Spleen (tissue), 13 donors: ENCODE measurements at regions of chr17 and their contacts with region 1.

Region 1: GRCh38 chr17:79393358-79394202 is 217.3 kb downstream of the RBFOX3 start:
- DNase-seq: peak; percentile 92
- H3K4me3 ChIP-seq: no peak overlapping the region
- H3K27ac ChIP-seq: no peak overlapping the region
- H3K4me1 ChIP-seq: peaks cover 0 to 9% (median 5%) of the 10 kb centered on the region in 6 donors
- H3K27me3 ChIP-seq: peaks cover 0 to 100% (median 61%) of the 10 kb centered on the region in 7 donors
- CTCF ChIP-seq: peak; percentile 77 to 96 (median 92)
- POLR2A ChIP-seq: no peak

Region 2: GRCh38 chr17:79087428-79088143 is 306.0 kb before region 1 on chr17:
- intact Hi-C with region 1: loop called (anchors 2 kb)
- DNase-seq: peak; percentile 92
- H3K4me3 ChIP-seq: no peak overlapping the region
- H3K27ac ChIP-seq: no peak overlapping the region
- H3K4me1 ChIP-seq: peaks cover 0 to 44% (median 12%) of the 10 kb centered on the region in 6 donors
- H3K27me3 ChIP-seq: peaks cover 0 to 24% (median 0%) of the 10 kb centered on the region in 7 donors
- CTCF ChIP-seq: peak; percentile 75 to 97 (median 89)
- POLR2A ChIP-seq: no peak

Region 3: DNA sequence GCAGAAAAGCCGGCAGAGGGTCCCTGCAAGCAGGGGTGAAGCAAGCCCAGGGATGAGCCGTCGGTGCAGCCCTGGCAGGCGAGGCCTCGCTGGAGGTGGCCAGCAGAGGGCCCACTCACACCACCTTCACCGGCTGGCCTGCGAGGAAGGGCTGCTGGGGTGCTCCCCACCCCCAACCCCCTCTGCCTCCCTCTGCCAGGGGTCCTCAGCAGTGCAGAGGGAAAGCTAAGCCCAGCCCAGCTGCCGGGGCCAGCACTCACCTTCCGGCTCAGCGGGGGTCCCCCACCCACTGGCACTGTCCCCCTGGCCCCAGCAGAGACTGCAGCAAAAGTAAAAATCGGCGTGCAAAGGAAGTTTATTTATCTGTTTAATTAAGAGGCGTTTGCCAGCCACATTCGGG is 205.5 kb before region 1 on chr17:
- intact Hi-C with region 1: loop called (anchors 5 kb)
- DNase-seq: no peak
- H3K4me3 ChIP-seq: no peak overlapping the region
- H3K27ac ChIP-seq: no peak overlapping the region
- H3K4me1 ChIP-seq: peaks cover 6 to 13% (median 8%) of the 10 kb centered on the region in 6 donors
- H3K27me3 ChIP-seq: peaks cover 2 to 100% (median 76%) of the 10 kb centered on the region in 7 donors
- CTCF ChIP-seq: peak in 9 of 11 experiments; percentile 32 to 67 (median 51)
- POLR2A ChIP-seq: no peak

Region 4: GRCh38 chr17:79531191-79532095 is 137.9 kb after region 1 on chr17:
- intact Hi-C with region 1: no loop called
- DNase-seq: peak; percentile 36
- H3K4me3 ChIP-seq: no peak overlapping the region
- H3K27ac ChIP-seq: no peak overlapping the region
- H3K4me1 ChIP-seq: no peaks in the 10 kb centered on the region
- H3K27me3 ChIP-seq: peaks cover 0 to 91% (median 14%) of the 10 kb centered on the region in 7 donors
- CTCF ChIP-seq: no peak
- POLR2A ChIP-seq: no peak